ENCODE measurements at regions of chrX and their contacts with region 1.

Region 1: GRCh38 chrX:35890699-35891098 is 28.8 kb upstream of the CFAP47 start:
- DNase-seq: peak in 1 of 2 donors; percentile 18
- ATAC-seq: peak in 1 of 8 donors; percentile 42
- H3K4me3 ChIP-seq: no peak overlapping the region
- H3K27ac ChIP-seq: no peak overlapping the region
- H3K4me1 ChIP-seq: no peaks in the 10 kb centered on the region
- H3K27me3 ChIP-seq: peaks cover 0 to 8% (median 0%) of the 10 kb centered on the region in 7 donors
- CTCF ChIP-seq: peak in 8 of 9 donors; percentile 8 to 65 (median 46)

Region 2: GRCh38 chrX:36867143-36867542 is 976.4 kb after region 1 on chrX:
- intact Hi-C with region 1: loop called in 3 of 10 experiments (anchors 5 to 10 kb)
- DNase-seq: no peak
- ATAC-seq: peak in 1 of 8 donors; percentile 35
- H3K4me3 ChIP-seq: no peak overlapping the region
- H3K27ac ChIP-seq: no peak overlapping the region
- H3K4me1 ChIP-seq: no peaks in the 10 kb centered on the region
- H3K27me3 ChIP-seq: peaks cover 0 to 30% (median 0%) of the 10 kb centered on the region in 7 donors
- CTCF ChIP-seq: peak in 8 of 9 donors; percentile 13 to 66 (median 58)

Measured in heart right ventricle (tissue), 16 donors.